ENCODE measurements at regions of chr11 and their contacts with region 1.

Region 1: GRCh38 chr11:6757373-6757967 is 14.3 kb downstream of the OR2AG2 start:
- DNase-seq: peak; percentile 68
- H3K4me3 ChIP-seq: no peak overlapping the region
- H3K27ac ChIP-seq: no peak overlapping the region
- H3K4me1 ChIP-seq: no peaks in the 10 kb centered on the region
- CTCF ChIP-seq: peak; percentile 83

Region 2: DNA sequence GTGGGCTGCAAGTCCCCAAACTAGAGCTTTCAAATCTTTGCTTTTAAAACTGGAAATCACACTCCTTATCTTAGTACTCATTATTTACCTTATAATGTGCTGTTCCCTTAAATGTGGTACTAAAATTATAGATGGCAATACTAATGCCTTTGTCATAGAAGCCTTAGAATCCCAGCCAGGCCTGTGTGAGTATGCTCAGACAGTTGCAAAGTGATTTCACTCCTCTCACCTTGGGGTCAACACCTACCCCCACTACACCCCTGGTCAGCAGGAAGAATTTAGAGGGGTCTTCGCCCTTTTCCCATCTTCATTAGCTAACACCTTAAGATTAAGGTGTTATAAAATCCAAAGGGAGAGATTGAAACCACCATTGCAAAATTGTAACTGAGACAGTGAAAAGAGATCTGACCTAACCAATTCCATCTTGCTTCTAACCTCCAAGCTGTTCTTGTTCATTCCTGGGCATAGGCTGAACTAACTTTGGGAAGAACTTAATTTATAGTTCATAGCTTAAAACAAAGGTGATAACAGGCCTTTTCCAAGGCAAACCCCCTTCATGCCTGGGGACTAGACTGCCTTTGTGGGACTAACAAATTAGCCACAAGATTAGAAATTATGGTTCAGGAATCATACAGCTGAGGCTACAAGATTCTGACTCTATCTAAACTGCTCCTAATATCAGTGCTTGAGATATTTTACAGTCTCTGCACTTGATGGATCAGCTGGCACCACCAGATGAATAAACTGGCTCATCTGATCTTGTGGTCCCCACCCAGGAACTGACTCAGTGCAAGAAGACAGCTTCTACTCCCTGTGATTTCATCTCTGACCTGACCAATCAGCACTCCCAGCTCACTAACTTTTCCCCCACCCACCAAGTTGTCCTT is 63.9 kb before region 1 on chr11:
- CTCF ChIA-PET with region 1: no interaction called
- POLR2A ChIA-PET with region 1: interaction called, 11 read pairs
- intact Hi-C with region 1: no loop called
- DNase-seq: no peak
- H3K4me3 ChIP-seq: no peak overlapping the region
- H3K27ac ChIP-seq: no peak overlapping the region
- H3K4me1 ChIP-seq: no peaks in the 10 kb centered on the region
- CTCF ChIP-seq: no peak

Region 3: DNA sequence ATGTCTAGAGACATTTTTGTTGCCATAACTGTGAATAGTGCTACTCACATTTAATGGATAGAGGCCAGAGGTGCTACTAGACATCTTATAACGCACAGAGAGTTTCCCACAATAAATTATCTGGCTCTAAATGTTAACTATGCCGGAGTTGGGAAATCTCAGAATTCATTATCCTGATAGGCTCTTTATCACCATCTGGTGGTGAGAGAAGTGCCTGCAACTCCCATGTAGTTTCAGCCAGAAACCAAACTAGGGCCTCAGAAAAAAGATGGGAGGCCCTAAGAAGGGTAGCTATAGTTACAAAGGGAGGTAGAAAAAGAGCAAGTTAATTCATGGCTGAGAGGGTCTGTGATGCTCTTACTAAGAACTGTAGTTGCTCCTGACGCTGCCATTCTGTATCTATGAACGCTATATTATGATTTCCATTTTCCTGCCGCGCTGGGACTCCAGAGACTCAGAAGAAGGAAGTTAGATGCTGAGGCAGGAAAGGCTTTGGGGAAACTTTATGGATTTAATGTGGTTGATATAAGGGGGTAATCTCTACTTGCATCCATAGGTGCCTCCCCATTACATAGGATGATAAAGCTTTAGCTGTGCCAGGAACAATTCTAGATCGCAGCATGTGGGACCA is 51.5 kb before region 1 on chr11:
- CTCF ChIA-PET with region 1: no interaction called
- POLR2A ChIA-PET with region 1: no interaction called
- intact Hi-C with region 1: loop called (anchors 1 kb)
- DNase-seq: peak; percentile 58
- H3K4me3 ChIP-seq: no peak overlapping the region
- H3K27ac ChIP-seq: no peak overlapping the region
- H3K4me1 ChIP-seq: no peaks in the 10 kb centered on the region
- CTCF ChIP-seq: peak; percentile 98

Region 4: GRCh38 chr11:6737872-6738466 is 19.5 kb before region 1 on chr11:
- CTCF ChIA-PET with region 1: interaction called, 11 read pairs
- POLR2A ChIA-PET with region 1: interaction called, 3 read pairs
- intact Hi-C with region 1: loop called (anchors 1 kb)
- DNase-seq: peak; percentile 80
- H3K4me3 ChIP-seq: no peak overlapping the region
- H3K27ac ChIP-seq: no peak overlapping the region
- H3K4me1 ChIP-seq: peaks cover 13% of the 10 kb centered on the region
- CTCF ChIP-seq: peak; percentile 91

Region 5: DNA sequence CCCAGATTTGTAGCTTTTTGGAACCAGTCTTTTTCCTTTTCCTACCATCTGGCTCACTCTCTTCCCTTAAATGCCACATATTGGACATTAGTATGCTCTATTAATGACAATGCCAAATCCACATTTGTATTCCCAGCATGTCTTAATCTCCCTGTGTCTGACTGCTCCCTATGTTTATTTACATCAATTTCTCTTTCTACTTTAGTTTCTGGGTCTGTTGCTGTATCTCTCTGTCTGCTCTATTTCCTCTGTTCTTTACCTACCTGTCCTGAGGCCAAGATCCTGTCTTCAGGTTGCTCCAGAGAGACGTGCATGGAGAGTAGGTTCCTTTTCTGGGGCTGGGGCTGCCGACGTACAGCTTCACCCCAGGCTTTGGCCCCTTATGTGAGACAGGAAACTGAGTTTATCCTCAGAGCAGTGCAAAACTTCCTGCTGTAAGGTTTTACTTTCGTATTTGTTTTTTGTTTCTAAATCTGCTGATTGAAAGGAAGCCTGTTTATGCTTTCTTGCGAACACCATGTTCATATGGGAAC is 11.3 kb before region 1 on chr11:
- CTCF ChIA-PET with region 1: interaction called, 12 read pairs
- POLR2A ChIA-PET with region 1: interaction called, 9 read pairs
- intact Hi-C with region 1: no loop called
- DNase-seq: peak; percentile 73
- H3K4me3 ChIP-seq: peak overlapping the region; percentile 57
- H3K27ac ChIP-seq: peak overlapping the region; percentile 13
- H3K4me1 ChIP-seq: peaks cover 25% of the 10 kb centered on the region
- CTCF ChIP-seq: no peak

Measured in OCI-LY7 (cell line).